Mammary epithelial cell (primary cell): ENCODE measurements at regions of chr16 and their contacts with region 1.

Region 1: DNA sequence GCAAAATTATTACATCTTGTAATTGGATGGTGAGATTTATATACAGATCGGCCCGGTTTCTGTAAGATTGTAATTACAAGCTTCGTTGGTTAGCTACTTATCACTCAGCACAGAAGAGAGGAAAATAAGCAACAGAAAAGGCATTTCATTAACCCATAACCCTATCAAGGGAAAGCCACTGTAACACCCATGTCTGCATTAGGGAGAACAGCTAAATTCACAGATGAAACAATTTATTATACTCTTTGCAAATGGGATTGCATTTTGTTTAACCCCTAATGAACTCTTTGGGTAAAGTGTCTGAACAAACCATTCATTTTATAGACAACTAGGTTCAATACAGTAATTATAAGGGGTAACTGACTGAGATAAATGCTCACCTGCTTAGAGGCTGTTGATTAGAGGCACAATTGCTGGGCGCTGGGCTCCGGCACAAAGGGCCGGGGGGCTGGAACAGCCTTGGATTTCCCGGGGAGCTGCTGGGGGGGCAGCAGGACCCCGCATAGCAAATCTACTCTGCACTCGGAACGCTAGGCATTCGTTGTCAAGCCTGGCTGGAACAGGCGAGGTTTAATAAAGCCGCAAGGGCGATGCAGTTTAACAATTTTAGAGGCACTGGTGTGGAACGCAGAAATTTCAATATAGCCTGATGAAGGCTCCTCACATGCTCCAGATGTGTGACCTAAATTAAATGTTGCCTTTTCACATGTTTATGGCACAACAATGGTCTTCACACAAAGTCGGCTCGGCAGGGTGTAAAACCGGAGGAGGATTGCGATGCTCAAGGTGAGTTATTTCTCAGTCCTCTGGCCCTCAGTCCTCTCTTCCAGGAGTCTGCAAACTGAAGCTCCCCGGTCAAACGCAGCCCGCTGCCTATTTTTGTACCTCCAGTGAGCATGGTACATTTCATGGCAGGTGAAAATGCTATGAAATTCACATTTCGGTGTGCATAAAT is 134.0 kb upstream of the IRX6 start:
- DNase-seq: no peak
- H3K4me3 ChIP-seq: no peak overlapping the region
- H3K27ac ChIP-seq: no peak overlapping the region
- H3K4me1 ChIP-seq: no peaks in the 10 kb centered on the region
- H3K27me3 ChIP-seq: no peaks in the 10 kb centered on the region
- CTCF ChIP-seq: no peak

Region 2: DNA sequence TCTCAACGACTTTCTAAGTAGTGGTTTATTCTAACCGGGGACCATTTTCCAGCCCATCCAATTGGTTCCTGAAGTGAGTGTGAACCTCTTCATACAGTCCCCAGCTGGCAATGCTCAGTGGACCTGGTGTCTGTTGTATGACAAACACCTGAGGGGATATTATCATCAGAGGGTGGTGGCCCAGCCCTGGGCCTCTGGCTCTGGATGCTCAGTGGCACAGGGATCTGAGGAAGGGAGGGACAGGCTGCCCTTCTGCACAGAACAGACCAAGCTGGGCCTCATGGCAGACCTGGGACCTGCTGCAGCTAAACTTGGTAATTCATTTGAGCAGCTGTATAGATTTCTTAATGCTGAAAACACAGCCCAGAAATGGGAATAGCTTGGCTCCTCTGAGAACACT is 186.7 kb before region 1 on chr16:
- CTCF ChIA-PET with region 1: interaction called, 17 read pairs
- dilution Hi-C with region 1: no loop called
- in situ Hi-C with region 1: no loop called
- intact Hi-C with region 1: no loop called
- DNase-seq: no peak
- H3K4me3 ChIP-seq: no peak overlapping the region
- H3K27ac ChIP-seq: no peak overlapping the region
- H3K4me1 ChIP-seq: no peaks in the 10 kb centered on the region
- H3K27me3 ChIP-seq: no peaks in the 10 kb centered on the region
- CTCF ChIP-seq: no peak

Region 3: GRCh38 chr16:55136356-55137150 is 53.4 kb before region 1 on chr16:
- CTCF ChIA-PET with region 1: no interaction called
- dilution Hi-C with region 1: loop called (anchors 5 kb)
- in situ Hi-C with region 1: no loop called
- intact Hi-C with region 1: no loop called
- DNase-seq: peak; percentile 63
- H3K4me3 ChIP-seq: no peak overlapping the region
- H3K27ac ChIP-seq: no peak overlapping the region
- H3K4me1 ChIP-seq: no peaks in the 10 kb centered on the region
- H3K27me3 ChIP-seq: no peaks in the 10 kb centered on the region
- CTCF ChIP-seq: no peak